ENCODE measurements at regions of chr21 and their contacts with region 1.

Region 1: GRCh38 chr21:32940079-32941014 is 85.4 kb upstream of the OLIG2 start:
- DNase-seq: peak; percentile 47 to 69 (median 63)
- H3K4me3 ChIP-seq: no peak overlapping the region
- H3K27ac ChIP-seq: no peak overlapping the region
- H3K4me1 ChIP-seq: no peaks in the 10 kb centered on the region
- H3K27me3 ChIP-seq: no peaks in the 10 kb centered on the region

Region 2: GRCh38 chr21:32929633-32930038 is 10.7 kb before region 1 on chr21:
- CTCF ChIA-PET with region 1: interaction called, 15 read pairs
- POLR2A ChIA-PET with region 1: no interaction called
- DNase-seq: no peak
- H3K4me3 ChIP-seq: no peak overlapping the region
- H3K27ac ChIP-seq: no peak overlapping the region
- H3K4me1 ChIP-seq: peaks cover 5 to 28% (median 19%) of the 10 kb centered on the region in 4 experiments
- H3K27me3 ChIP-seq: no peaks in the 10 kb centered on the region

Measured in common myeloid progenitor, CD34-positive (primary cell).